Mammary epithelial cell (primary cell): ENCODE measurements at regions of chr12 and their contacts with region 1.

Region 1: GRCh38 chr12:27424631-27425230 is 21.8 kb upstream of the SMCO2 start:
- DNase-seq: peak; percentile 38
- H3K4me3 ChIP-seq: no peak overlapping the region
- H3K27ac ChIP-seq: no peak overlapping the region
- H3K4me1 ChIP-seq: peaks cover 3% of the 10 kb centered on the region
- H3K27me3 ChIP-seq: no peaks in the 10 kb centered on the region
- CTCF ChIP-seq: peak; percentile 56 to 65

Region 2: GRCh38 chr12:27635349-27635972 is 210.7 kb after region 1 on chr12:
- CTCF ChIA-PET with region 1: no interaction called
- dilution Hi-C with region 1: no loop called
- in situ Hi-C with region 1: loop called (anchors 10 kb)
- intact Hi-C with region 1: loop called (anchors 1 kb)
- DNase-seq: peak; percentile 46
- H3K4me3 ChIP-seq: no peak overlapping the region
- H3K27ac ChIP-seq: no peak overlapping the region
- H3K4me1 ChIP-seq: peaks cover 6% of the 10 kb centered on the region
- H3K27me3 ChIP-seq: no peaks in the 10 kb centered on the region
- CTCF ChIP-seq: peak; percentile 54 to 69

Region 3: DNA sequence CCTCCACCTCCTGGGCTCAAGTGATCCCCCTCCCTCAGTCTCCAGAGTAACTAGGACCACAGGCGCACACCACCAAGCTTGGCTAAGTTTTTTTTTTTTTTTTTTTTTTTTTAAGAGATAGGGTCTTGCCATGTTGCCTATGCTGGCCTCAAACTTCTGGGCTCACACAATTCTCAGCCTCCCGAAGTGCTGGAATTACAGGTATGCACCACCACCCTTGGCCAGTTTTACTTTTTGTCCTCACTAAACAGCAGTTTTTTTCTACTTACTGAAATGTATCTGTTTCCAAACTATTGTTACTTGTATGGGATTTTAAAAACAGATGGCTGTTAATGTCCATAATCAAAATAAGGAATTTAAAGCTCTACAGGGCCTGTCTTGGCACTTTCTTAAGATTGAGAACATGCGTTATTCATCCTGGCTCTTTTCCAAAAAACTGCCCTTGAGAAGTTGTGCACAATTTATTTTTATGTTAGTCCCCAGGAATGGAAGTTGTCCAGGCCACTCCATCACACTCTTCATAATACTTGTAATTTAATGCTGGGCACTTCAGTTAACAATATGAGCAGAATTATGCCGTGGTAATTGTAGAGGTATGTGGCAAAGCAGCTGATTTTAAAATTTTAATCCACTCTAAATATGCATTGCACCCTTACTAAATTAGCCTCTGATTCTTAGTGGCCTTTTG is 219.6 kb after region 1 on chr12:
- CTCF ChIA-PET with region 1: no interaction called
- dilution Hi-C with region 1: no loop called
- in situ Hi-C with region 1: loop called (anchors 10 kb)
- intact Hi-C with region 1: no loop called
- DNase-seq: no peak
- H3K4me3 ChIP-seq: no peak overlapping the region
- H3K27ac ChIP-seq: no peak overlapping the region
- H3K4me1 ChIP-seq: peaks cover 4% of the 10 kb centered on the region
- H3K27me3 ChIP-seq: no peaks in the 10 kb centered on the region
- CTCF ChIP-seq: no peak

Region 4: GRCh38 chr12:27703710-27704452 is 279.1 kb after region 1 on chr12:
- CTCF ChIA-PET with region 1: no interaction called
- dilution Hi-C with region 1: no loop called
- in situ Hi-C with region 1: no loop called
- intact Hi-C with region 1: loop called (anchors 1 kb)
- DNase-seq: peak; percentile 66
- H3K4me3 ChIP-seq: no peak overlapping the region
- H3K27ac ChIP-seq: no peak overlapping the region
- H3K4me1 ChIP-seq: no peaks in the 10 kb centered on the region
- H3K27me3 ChIP-seq: no peaks in the 10 kb centered on the region
- CTCF ChIP-seq: peak; percentile 90 to 93